ENCODE measurements at regions of chr3 and their contacts with region 1.

Region 1: DNA sequence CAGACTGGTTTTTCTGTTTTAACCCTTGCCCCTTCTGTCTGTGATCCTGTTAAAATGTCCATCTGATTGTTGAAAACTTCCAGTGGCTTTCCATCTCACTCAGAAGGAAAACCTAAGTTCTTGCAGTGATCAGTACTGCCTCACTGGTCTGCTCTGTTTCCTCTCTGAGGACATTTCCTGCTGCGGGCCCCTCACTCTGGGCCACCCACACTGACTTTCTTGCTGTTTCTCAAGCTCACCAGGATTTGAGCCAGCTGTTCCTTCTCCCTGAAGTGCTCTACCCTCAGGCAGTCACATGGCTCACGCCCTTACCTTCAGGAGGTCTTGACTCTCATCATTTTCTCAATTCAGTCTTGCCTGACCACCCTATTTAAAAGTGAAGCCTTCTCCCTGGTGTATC is 1.8 kb downstream of the GRK7 start:
- DNase-seq: no peak
- ATAC-seq: no peak
- H3K4me3 ChIP-seq: no peak overlapping the region
- H3K27ac ChIP-seq: no peak overlapping the region
- H3K4me1 ChIP-seq: peaks cover 6 to 10% of the 10 kb centered on the region in 2 experiments; a peak in 4 of 5 replicates
- H3K27me3 ChIP-seq: no peaks in the 10 kb centered on the region
- CTCF ChIP-seq: no peak
- EP300 ChIP-seq: no peak
- POLR2A ChIP-seq: no peak
- RAD21 ChIP-seq: no peak

Region 2: DNA sequence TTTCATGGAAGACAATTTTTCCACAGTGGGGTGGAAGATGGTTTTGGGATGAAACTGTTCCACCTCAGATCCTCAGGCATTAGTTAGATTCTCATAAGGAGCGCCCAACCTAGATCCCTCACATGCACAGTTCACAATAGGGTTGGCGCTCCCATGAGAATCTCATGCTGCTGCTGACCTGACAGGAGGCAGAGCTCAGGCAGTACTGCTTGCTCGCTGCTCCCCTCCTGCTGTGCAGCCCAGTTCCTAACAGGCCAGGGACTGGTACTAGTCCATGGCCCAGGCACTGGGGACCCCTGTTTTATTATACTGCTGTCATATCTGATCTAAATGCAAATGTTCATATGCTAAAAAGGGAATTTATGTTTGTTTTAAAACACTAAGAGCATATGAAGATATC is 11.6 kb before region 1 on chr3:
- CTCF ChIA-PET with region 1: no interaction called
- POLR2A ChIA-PET with region 1: interaction called, 13 read pairs
- in situ Hi-C with region 1: no loop called
- intact Hi-C with region 1: no loop called
- DNase-seq: no peak
- ATAC-seq: no peak; the same call in 2 of the 3 replicates
- H3K4me3 ChIP-seq: no peak overlapping the region
- H3K27ac ChIP-seq: no peak overlapping the region
- H3K4me1 ChIP-seq: peaks cover 0 to 2% of the 10 kb centered on the region in 2 experiments; a peak in 1 of 5 replicates
- H3K27me3 ChIP-seq: no peaks in the 10 kb centered on the region
- CTCF ChIP-seq: no peak
- EP300 ChIP-seq: no peak
- POLR2A ChIP-seq: no peak
- RAD21 ChIP-seq: no peak

Region 3: DNA sequence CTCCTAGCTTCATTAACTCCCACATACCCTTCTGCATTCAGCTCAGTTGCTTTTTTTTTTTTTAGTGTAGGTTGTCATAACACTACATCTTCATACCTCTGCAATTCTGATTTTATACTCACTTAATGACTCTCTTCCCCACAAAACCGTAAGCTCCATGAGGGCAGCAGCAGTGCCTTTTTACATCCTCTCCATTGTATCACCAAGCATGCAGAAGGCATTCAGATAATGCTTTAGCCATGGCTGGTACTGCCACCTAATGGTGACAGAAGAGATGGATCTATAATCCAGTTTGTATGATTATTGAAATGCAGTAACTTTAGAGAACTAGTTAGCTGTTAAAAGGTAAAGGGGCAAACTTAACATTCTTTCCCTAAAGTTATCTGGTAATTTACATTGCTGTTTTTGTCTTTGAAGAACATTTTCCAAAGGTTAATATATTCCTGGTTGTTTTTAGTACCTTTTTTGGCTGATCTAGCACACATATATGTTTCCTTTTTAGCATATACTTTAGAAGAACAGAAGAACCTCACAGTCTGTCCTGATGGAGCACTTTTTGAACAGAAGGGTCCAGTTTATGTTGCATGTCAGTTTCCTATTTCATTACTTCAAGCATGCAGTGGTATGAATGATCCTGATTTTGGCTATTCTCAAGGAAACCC is 148.3 kb after region 1 on chr3:
- CTCF ChIA-PET with region 1: no interaction called
- POLR2A ChIA-PET with region 1: no interaction called
- in situ Hi-C with region 1: no loop called
- intact Hi-C with region 1: no loop called
- DNase-seq: peak; percentile 50 to 72 (median 54)
- ATAC-seq: peak; percentile 82
- H3K4me3 ChIP-seq: no peak overlapping the region
- H3K27ac ChIP-seq: no peak overlapping the region
- H3K4me1 ChIP-seq: no peaks in the 10 kb centered on the region
- H3K27me3 ChIP-seq: no peaks in the 10 kb centered on the region
- CTCF ChIP-seq: peak; percentile 49 to 67 (median 62)
- EP300 ChIP-seq: no peak
- POLR2A ChIP-seq: no peak
- RAD21 ChIP-seq: peak; percentile 51 to 81

Region 4: GRCh38 chr3:141972399-141972798 is 207.4 kb after region 1 on chr3:
- CTCF ChIA-PET with region 1: no interaction called
- POLR2A ChIA-PET with region 1: no interaction called
- in situ Hi-C with region 1: no loop called
- intact Hi-C with region 1: no loop called
- DNase-seq: peak in 1 of 4 experiments; percentile 21
- ATAC-seq: peak; percentile 65
- H3K4me3 ChIP-seq: no peak overlapping the region
- H3K27ac ChIP-seq: no peak overlapping the region
- H3K4me1 ChIP-seq: no peaks in the 10 kb centered on the region
- H3K27me3 ChIP-seq: no peaks in the 10 kb centered on the region
- CTCF ChIP-seq: no peak
- EP300 ChIP-seq: no peak
- POLR2A ChIP-seq: no peak
- RAD21 ChIP-seq: no peak